ENCODE measurements at regions of chr10 and their contacts with region 1.

Region 1: DNA sequence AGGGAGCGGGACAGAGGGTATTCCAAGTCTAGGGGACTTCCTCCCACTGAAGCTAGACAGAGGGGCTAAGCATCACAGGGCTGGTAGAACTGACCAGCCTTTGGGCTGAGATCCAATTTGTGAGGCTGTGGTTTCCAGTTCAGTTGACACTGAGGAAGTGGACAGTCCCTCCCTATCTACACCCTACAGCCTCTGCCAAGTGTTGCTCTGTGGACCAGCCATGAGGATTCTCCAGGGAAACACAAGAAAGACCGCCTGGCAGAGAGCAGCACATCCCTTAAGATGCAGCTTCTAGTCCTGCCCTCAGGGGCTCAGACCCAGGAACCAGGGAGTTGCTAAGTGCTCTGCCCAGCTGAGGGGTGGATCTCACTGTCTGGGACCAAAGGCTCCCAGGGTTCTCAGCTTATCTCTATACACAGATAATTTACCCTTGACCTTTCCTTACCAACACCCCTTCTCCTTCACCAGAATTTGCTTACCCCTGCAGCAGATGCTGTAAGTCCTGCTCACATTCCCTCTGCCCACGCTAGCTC is 252.0 kb downstream of the SKIDA1 start:
- H3K4me3 ChIP-seq: no peak overlapping the region
- H3K27ac ChIP-seq: no peak overlapping the region
- H3K4me1 ChIP-seq: no peaks in the 10 kb centered on the region
- CTCF ChIP-seq: no peak

Region 2: DNA sequence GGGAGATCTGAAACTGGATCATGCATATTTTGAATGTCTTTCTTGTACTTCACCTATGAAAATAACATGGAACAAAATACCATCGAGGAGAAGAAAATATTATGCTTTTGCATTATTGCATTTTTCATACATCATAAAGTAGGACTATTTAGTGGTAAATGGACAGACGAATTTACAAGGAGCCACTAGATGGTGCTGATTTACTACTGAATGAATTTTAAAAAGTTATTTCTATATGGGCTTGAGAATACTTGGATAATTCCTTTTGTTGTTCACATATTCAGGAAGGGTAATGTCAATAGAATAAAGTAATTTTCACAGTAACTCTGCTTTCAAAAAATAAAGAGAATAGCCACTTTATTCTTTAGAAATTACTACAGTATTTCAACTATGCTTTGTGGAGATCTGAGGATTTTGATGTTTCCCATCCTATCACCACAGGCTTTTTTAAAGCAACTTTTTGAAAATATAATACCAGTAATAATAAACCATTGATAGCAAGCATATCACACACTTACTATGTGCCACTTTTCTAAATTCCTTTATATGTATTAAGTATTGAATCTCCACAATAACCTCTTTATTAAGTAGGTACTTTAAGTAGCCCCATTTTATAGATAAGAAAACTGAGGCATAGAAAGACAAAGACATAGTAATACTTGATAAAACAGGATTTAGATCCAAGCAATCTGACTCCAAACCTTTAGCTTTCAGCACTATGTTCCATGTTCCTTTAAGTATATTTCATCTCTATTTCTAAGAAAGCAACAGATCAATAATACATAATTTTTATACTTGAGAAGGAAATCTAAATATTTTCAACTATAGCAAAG is 415.0 kb before region 1 on chr10:
- CTCF ChIA-PET with region 1: interaction called, 12 read pairs
- POLR2A ChIA-PET with region 1: no interaction called
- H3K4me3 ChIP-seq: no peak overlapping the region
- H3K27ac ChIP-seq: no peak overlapping the region
- H3K4me1 ChIP-seq: no peaks in the 10 kb centered on the region
- CTCF ChIP-seq: no peak

Region 3: GRCh38 chr10:20990604-20991003 is 282.9 kb before region 1 on chr10:
- CTCF ChIA-PET with region 1: no interaction called
- POLR2A ChIA-PET with region 1: no interaction called
- H3K4me3 ChIP-seq: no peak overlapping the region
- H3K27ac ChIP-seq: no peak overlapping the region
- H3K4me1 ChIP-seq: no peaks in the 10 kb centered on the region
- CTCF ChIP-seq: no peak

Region 4: DNA sequence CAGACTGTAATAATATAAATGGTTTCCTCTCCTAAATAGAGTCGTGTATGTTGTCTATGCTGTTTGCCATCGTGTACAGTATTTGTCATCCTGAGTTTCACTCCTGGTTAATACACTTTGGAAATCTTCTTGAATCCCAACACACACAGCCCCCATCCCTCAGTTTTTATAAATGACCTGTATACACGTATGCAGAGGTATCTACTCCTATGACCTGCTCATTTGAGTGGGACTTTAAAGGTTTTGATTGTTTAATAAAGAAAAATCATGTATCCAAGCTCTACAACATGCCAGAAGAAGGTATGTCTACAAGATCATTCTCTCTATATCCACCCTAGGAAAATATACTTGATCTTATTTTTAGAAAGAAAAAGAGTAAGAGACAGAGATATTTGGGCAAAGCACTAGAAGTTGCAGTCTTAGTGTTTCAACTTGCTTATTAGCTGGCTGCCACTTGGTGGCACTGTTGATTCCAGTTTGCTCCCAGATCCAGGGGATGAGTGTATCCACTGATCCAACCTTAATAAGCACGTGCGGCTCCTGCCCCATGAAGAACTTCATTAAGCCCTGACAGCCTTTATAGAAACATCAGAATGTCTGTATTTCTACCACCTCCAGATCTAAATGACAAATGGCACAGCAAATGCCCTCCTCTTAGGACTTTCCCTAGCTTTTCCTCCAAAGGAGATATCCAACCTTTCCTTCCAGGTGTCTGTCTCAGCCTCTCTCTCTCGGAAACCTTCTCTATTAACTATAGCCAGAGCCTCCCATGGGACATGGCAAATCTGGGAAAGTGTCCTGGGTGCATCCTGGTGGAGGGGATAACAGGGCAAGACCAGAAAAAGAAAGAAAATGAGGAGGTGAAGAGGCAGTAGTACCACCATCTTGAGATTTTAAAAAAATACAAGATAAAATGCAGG is 194.8 kb before region 1 on chr10:
- CTCF ChIA-PET with region 1: interaction called, 82 read pairs
- POLR2A ChIA-PET with region 1: no interaction called
- H3K4me3 ChIP-seq: no peak overlapping the region
- H3K27ac ChIP-seq: no peak overlapping the region
- H3K4me1 ChIP-seq: peaks cover 3% of the 10 kb centered on the region; the same call in 1 of the 2 replicates
- CTCF ChIP-seq: peak; percentile 59; the same call in 1 of the 2 replicates

Region 5: GRCh38 chr10:21912625-21913024 is 639.2 kb after region 1 on chr10:
- CTCF ChIA-PET with region 1: no interaction called
- POLR2A ChIA-PET with region 1: no interaction called
- H3K4me3 ChIP-seq: no peak overlapping the region
- H3K27ac ChIP-seq: no peak overlapping the region
- H3K4me1 ChIP-seq: no peaks in the 10 kb centered on the region
- CTCF ChIP-seq: no peak

Measured in HEK293 (cell line).